ENCODE measurements at regions of chr6 and their contacts with region 1.

Region 1: GRCh38 chr6:107292715-107293271 is 166.6 kb downstream of the PDSS2 start:
- DNase-seq: no peak
- ATAC-seq: no peak
- H3K4me3 ChIP-seq: no peak overlapping the region
- H3K4me1 ChIP-seq: no peaks in the 10 kb centered on the region
- CTCF ChIP-seq: no peak

Region 2: DNA sequence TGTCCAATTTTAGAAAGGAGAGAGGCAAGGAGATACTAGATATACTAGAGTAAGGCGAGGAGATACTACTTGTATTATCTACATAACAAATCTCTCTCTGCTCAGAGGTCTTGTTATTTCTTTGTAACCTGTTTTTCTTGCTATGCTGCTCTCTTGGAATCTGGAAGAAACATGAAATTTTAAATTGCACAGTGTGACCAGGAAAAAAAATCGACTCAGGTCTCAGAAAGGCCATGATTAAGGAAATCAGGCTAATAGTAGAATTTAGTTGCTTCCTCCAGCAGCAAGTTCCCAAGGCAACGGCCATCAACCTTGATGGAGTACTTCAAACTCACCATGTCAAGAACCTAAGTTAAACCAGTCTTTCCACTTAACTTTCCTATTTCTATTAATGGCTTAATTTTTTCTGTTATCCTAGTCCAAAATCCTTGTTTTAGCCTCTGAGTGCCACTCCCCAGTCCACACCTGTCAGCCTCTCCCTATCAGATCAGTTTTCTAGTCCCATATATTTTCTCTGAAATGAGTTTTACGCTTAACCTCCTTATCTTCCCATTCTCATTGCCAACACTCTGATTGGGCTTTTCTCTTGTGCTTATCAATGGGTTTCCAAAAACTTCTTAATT is 89.8 kb before region 1 on chr6:
- intact Hi-C with region 1: no loop called
- DNase-seq: no peak
- ATAC-seq: no peak
- H3K4me3 ChIP-seq: no peak overlapping the region
- H3K4me1 ChIP-seq: no peaks in the 10 kb centered on the region
- CTCF ChIP-seq: no peak

Region 3: DNA sequence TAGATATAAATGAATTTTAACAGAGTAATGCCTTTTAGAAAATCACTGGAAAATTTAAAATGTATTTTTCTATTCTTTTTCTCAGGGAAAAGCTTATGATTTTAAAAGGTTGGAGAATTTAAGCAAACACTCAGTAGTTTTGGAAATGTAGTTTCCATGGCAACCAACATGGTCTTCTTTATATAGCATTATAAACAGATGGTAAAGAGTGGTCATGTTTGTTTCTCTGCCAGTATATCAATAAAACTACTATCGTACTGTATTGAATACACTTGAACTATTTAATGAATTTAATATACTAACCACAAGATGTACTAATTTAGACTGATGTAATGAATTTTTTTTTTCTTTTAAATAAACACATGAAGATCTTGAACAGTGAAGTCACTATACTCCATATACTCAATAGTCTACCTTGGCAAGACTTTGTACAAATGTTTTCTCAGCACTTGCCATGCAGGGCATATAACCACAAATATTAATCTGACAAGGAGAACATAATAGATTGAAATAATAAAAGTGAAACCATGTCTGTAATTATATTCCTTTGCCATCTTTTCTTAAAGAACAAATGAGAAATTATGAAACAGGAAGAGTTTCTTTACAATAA is 61.1 kb after region 1 on chr6:
- intact Hi-C with region 1: loop called in 1 of 2 experiments (anchors 2 kb)
- DNase-seq: no peak
- ATAC-seq: no peak
- H3K4me3 ChIP-seq: no peak overlapping the region
- H3K4me1 ChIP-seq: no peaks in the 10 kb centered on the region
- CTCF ChIP-seq: no peak

Measured in mucosa of descending colon (tissue), 3 donors.